Activated CD8-positive, alpha-beta T cell treated with anti-CD3 and anti-CD28 coated beads, Interleukin-2, amount 10 ng/mL, durations not matched to agents 7 days and 5 days (primary cell): ENCODE measurements at regions of chr9 and their contacts with region 1.

Region 1: GRCh38 chr9:130235897-130236668 is 29.5 kb upstream of the HMCN2 start:
- DNase-seq: peak; percentile 73
- ATAC-seq: peak; percentile 60
- H3K4me3 Mint-ChIP-seq: no peak overlapping the region
- H3K27ac Mint-ChIP-seq: no peak overlapping the region
- H3K4me1 Mint-ChIP-seq: peaks cover 29% of the 10 kb centered on the region
- H3K27me3 Mint-ChIP-seq: no peaks in the 10 kb centered on the region

Region 2: DNA sequence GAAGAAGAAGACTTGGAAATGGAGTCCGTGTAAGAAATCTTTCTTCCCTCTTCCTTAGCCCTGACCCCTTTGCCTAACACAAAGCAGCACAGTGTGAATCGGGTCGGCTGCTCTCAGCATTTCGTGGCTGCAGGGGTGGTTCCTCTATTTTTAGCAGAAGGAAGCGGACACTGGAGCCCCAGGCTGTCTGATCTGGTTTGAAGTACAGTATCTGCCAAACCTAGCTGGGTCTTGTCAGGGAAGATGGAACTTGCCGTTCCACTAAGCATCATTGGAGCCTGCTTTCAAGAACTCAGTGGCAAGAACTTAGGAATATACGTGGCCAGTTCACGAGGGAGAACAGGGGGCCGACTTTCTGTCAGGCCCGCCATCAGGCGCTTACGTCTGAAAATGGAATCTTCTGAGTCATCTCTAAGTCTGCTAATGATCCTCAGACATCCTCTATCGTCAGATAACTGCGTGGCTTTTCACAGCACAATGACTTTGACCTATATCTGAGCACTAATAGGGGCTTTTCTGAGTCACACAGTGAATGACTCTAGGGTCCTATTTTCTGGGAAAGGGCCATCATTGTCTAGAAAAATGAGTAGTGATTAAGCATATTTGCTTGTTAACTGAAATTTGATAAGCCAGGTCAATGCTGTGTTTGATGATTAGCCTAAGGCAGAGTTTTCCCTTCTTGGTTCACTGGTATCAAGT is 107.2 kb before region 1 on chr9:
- CTCF ChIA-PET with region 1: interaction called, 10 read pairs
- POLR2A ChIA-PET with region 1: no interaction called
- DNase-seq: peak; percentile 71
- ATAC-seq: peak; percentile 65
- H3K4me3 Mint-ChIP-seq: peak overlapping the region; percentile 76
- H3K27ac Mint-ChIP-seq: peak overlapping the region; percentile 99
- H3K4me1 Mint-ChIP-seq: peaks cover 57% of the 10 kb centered on the region
- H3K27me3 Mint-ChIP-seq: no peaks in the 10 kb centered on the region

Region 3: DNA sequence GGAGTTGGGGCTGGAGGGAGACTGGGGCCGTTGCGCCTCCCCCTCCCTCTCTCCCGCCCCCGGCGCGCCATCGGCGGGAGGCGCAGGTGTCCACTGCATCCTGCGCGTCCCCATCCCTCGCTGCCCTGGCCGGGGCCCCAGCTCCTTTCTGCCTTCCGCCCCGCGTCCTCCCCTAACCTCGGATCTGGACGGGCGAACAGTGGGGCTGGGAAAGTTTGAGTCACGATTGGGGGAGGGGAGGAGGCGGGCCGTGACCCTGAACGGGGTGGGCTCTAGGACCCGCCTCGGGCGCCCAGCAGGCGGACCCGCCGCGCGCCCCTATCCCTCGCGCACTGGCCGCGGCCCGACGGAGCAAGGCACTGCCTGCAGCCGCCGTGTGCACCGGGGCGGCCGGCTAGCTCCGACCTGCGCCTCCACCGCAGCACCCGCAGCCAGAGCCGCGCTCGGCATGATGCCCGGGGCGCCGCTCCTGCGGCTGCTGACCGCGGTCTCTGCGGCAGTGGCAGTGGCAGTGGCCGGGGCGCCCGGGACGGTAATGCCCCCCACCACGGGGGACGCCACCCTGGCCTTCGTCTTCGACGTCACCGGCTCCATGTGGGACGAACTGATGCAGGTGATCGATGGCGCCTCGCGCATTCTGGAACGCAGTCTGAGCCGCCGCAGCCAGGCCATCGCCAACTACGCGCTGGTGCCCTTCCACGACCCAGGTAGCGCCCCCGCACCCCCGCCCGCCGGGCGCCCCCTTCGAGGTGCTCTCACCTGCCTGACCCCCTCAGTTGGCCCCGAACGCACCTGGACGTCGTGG is 29.6 kb after region 1 on chr9 and contains the start of gene HMCN2:
- CTCF ChIA-PET with region 1: no interaction called
- POLR2A ChIA-PET with region 1: no interaction called
- DNase-seq: no peak
- ATAC-seq: no peak
- H3K4me3 Mint-ChIP-seq: no peak within 1 kb of the TSS
- H3K27ac Mint-ChIP-seq: no peak within 1 kb of the TSS
- H3K4me1 Mint-ChIP-seq: no peaks in the 10 kb centered on the region
- H3K27me3 Mint-ChIP-seq: peaks cover 62% of the 10 kb centered on the region
- total RNA-seq, gene HMCN2: not detected

Region 4: DNA sequence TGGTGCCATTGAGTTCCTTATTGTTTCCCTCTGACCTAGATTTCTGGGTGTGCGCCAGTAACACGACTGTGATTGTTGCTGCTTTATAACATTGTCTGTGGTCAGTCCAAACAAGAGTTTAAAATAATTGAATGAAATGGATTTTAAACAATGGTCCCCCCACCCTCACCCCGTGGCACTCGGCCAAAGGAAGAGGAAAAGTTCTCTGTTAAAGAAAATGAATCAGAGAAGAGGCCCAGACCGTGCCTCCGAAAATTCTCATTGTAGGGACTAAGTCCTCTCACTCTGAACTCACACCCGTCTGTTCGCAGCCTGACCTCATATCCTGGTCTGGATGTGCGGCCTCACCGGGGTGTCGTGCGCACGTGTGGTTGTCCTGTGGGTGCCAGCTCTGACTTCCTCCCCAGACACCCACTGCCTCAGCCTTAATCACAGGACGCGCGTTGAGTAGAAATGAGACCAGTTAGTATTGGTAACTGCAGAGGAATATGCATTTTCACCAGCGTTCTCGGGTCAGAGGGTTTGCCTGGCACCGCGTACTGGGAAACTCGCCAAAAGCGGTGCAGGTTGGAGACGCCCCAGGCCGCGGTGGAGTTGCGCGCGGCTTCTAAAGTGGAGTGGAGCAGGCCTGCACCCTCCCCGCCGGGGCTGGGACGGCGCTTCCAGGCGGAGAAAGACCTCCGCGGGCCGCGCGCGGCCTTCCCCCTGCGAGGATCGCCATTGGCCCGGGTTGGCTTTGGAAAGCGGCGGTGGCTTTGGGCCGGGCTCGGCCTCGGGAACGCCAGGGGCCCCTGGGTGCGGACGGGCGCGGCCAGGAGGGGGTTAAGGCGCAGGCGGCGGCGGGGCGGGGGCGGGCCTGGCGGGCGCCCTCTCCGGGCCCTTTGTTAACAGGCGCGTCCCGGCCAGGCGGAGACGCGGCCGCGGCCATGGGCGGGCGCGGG is 598.6 kb after region 1 on chr9 and contains the start of gene ABL1:
- CTCF ChIA-PET with region 1: no interaction called
- POLR2A ChIA-PET with region 1: no interaction called
- DNase-seq: peak; percentile 74
- ATAC-seq: peak; percentile 78
- H3K4me3 Mint-ChIP-seq: peak within 1 kb of the TSS; percentile 92
- H3K27ac Mint-ChIP-seq: peak within 1 kb of the TSS; percentile 95
- H3K4me1 Mint-ChIP-seq: peaks cover 20% of the 10 kb centered on the region
- H3K27me3 Mint-ChIP-seq: peaks cover 3% of the 10 kb centered on the region
- total RNA-seq, gene ABL1: 31.7 to 34.1 TPM